ENCODE measurements at regions of chr1 and their contacts with region 1.

Region 1: GRCh38 chr1:184036517-184036949 is 995 bp downstream of the COLGALT2 start:
- DNase-seq: peak in 7 of 10 donors; percentile 46 to 83 (median 65)
- H3K4me3 ChIP-seq: peak overlapping the region; percentile 56 to 91 (median 80)
- H3K27ac ChIP-seq: peak overlapping the region; percentile 90 to 100 (median 98)
- H3K27me3 ChIP-seq: no peaks in the 10 kb centered on the region
- CTCF ChIP-seq: peak in 2 of 56 donors; percentile 1 to 8

Region 2: DNA sequence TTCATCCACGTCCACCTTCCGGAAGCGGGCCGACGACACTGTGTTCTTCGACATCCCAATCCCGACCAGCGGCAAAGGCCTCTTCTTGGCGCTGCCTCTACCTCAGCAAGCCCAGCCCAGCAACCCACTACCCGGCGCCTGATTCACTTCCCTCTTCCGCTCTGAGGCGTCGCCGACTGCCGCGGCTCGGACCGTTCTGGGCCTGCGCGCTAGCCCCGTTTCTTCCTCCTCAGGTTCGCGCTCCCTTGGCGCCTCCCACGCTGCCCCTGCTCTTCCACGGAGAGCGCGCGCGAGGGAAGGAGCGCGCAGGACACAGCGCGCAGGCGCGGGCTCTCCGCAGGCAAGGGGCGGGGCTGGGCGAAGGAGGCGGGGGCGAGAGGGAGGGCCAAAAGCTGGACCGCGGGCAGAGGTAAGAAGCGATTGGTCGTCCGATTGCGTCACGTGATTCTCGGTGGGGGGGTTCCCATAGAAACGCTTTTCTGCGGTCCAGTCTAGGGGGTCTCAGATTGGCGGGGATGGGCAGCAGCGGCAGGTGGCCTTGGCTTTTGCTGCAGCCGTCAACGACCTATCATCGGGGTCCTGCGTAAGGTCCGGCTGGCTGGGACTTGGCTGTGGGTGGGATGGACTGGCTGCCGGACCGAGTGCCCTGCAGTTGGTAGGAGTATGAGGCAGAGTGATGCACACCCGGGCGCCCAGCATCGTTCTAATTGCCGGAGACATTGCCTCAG is 400.8 kb before region 1 on chr1 and contains the start of gene ARPC5:
- intact Hi-C with region 1: loop called in 1 of 2 experiments (anchors 10 kb)
- DNase-seq: peak; percentile 94 to 99 (median 97)
- H3K4me3 ChIP-seq: peak within 1 kb of the TSS; percentile 70 to 99 (median 88)
- H3K27ac ChIP-seq: peak within 1 kb of the TSS; percentile 69 to 99 (median 94)
- H3K27me3 ChIP-seq: no peaks in the 10 kb centered on the region
- CTCF ChIP-seq: peak in 35 of 56 donors; percentile 4 to 60 (median 24)
- total RNA-seq, gene ARPC5: 31.6 to 78.5 (median 50.0) TPM

Region 3: DNA sequence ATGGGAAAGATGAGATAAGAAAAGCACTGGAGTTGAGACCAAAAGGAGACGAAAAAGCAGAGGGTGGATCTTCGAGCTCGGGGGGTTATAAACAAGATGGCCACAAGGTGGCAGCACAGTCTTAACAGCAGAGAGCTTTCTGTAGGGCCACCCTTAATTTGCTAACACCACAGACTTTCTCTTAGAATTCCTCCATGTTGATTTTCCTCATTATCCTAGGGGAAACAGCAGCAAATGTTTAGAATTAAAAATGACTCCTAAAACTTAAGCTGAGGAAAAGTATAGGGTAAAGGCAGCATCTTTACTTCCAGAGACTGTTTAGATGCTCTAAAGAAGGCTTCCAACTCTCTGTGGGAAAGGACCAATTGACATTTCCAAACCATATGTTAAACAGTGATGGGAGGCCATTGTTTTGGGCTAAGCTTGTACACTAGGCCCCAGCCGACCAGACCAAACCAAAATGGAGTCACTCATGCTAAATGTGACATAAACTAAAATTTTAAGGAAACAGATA is 380.9 kb before region 1 on chr1:
- intact Hi-C with region 1: loop called in 1 of 2 experiments (anchors 10 kb)
- DNase-seq: peak; percentile 76 to 91 (median 82)
- H3K4me3 ChIP-seq: peak overlapping the region in 3 of 59 donors; percentile 9 to 13 (median 12)
- H3K27ac ChIP-seq: peak overlapping the region in 39 of 59 donors; percentile 3 to 78 (median 51)
- H3K27me3 ChIP-seq: no peaks in the 10 kb centered on the region
- CTCF ChIP-seq: peak; percentile 83 to 99 (median 96)

Region 4: DNA sequence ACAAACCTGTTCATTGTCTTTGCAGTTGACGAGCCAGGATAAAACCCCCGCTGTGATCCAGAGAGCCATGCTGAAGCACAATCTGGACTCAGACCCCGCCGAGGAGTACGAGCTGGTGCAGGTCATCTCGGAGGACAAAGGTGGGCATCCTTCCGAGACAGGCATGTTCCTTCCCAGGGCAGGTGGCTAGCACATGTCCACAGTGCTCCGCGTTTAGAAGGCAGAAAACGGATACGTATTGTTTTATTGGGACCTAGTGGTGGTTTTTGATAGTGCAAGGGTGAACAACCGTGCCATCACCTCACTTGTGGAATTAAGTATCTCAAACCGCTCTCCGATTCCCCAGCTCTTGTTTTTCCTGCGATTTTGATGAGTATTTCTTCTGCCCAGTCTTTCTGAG is 114.3 kb before region 1 on chr1:
- intact Hi-C with region 1: loop called in 1 of 2 experiments (anchors 1 kb)
- DNase-seq: no peak
- H3K4me3 ChIP-seq: no peak overlapping the region
- H3K27ac ChIP-seq: peak overlapping the region in 58 of 59 donors; percentile 84 to 100 (median 97)
- H3K27me3 ChIP-seq: no peaks in the 10 kb centered on the region
- CTCF ChIP-seq: peak in 9 of 56 donors; percentile 11 to 43 (median 31)

Region 5: DNA sequence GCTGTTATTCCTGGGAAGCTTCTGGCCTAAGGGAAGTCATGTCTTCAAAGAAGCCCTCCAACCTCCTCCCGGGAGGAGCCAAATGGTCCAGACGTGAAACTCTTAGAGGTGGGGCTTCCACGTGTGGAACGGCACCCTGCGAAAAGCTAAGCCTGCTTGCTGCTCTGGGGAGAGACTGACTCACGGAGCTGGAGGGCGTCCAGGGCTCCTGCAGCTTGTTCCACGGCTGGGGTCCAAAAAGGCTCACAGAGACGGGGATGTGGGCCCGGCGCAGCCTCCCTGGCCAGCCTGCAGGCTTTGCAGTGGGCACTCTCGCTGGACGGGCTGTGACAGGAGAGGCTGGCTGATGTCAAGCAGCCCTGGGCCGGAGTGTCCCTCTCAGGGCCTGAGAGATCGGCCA is 104.1 kb before region 1 on chr1:
- intact Hi-C with region 1: loop called (anchors 5 kb)
- DNase-seq: peak; percentile 83 to 95 (median 86)
- H3K4me3 ChIP-seq: peak overlapping the region in 24 of 59 donors; percentile 1 to 39 (median 14)
- H3K27ac ChIP-seq: peak overlapping the region; percentile 66 to 100 (median 95)
- H3K27me3 ChIP-seq: no peaks in the 10 kb centered on the region
- CTCF ChIP-seq: peak in 1 of 56 donors; percentile 13

Region 6: GRCh38 chr1:183937611-183938010 is 98.9 kb before region 1 on chr1:
- intact Hi-C with region 1: loop called (anchors 5 kb)
- DNase-seq: no peak
- H3K4me3 ChIP-seq: no peak overlapping the region
- H3K27ac ChIP-seq: peak overlapping the region in 54 of 59 donors; percentile 10 to 100 (median 94)
- H3K27me3 ChIP-seq: no peaks in the 10 kb centered on the region
- CTCF ChIP-seq: no peak

Region 7: DNA sequence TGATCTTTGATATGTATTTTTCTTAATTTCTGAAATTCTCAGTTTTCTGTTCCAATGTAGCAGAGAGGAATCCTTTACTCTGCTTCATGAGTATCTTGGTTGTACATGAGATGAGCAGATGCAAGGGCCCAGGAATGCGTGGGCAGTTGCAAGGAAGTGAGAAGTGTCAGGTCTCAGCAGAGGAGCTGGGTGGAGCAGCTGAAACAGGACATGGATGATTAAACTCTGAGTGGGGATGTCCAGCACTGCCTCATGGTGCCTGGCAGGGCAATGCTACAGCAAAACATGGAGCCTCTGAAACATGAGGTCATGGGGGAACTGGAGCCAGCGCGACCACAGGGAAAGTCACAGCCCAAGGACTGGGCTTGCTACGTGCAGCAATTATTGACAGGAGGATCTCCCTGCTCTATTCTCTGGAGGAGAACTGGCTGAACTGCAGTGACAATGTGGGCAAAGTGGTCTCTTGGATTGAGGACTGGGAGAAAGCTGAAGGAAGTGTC is 47.4 kb before region 1 on chr1:
- intact Hi-C with region 1: loop called in 1 of 2 experiments (anchors 10 kb)
- DNase-seq: peak in 9 of 10 donors; percentile 43 to 81 (median 73)
- H3K4me3 ChIP-seq: peak overlapping the region in 1 of 59 donors; percentile 8
- H3K27ac ChIP-seq: peak overlapping the region in 58 of 59 donors; percentile 41 to 98 (median 86)
- H3K27me3 ChIP-seq: no peaks in the 10 kb centered on the region
- CTCF ChIP-seq: no peak

Region 8: DNA sequence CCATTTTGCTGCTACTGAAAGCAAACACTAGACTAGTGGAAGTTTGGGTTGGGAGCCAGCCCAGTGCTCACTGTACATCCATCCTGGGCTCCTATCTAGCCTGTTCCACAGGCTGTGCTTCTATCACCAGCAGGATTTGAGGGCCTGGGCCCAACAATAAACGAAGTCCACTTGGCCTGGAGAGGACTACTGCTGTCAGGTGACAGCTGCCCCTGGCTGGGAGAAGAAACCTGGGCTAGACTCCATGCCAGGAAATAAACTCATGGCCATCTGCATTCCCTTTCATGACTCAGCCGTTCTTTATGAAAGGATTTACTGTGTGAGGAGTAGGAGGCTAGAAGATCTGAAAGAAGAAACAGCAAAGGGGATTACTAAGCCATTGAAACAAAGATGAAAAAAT is 34.5 kb before region 1 on chr1:
- intact Hi-C with region 1: no loop called
- DNase-seq: peak in 8 of 10 donors; percentile 42 to 87 (median 62)
- H3K4me3 ChIP-seq: peak overlapping the region in 3 of 59 donors; percentile 9 to 11 (median 10)
- H3K27ac ChIP-seq: peak overlapping the region; percentile 11 to 95 (median 85)
- H3K27me3 ChIP-seq: no peaks in the 10 kb centered on the region
- CTCF ChIP-seq: peak in 1 of 56 donors; percentile 25